CD4-positive, alpha-beta memory T cell (primary cell): ENCODE measurements at regions of chr20 and their contacts with region 1.

Region 1: DNA sequence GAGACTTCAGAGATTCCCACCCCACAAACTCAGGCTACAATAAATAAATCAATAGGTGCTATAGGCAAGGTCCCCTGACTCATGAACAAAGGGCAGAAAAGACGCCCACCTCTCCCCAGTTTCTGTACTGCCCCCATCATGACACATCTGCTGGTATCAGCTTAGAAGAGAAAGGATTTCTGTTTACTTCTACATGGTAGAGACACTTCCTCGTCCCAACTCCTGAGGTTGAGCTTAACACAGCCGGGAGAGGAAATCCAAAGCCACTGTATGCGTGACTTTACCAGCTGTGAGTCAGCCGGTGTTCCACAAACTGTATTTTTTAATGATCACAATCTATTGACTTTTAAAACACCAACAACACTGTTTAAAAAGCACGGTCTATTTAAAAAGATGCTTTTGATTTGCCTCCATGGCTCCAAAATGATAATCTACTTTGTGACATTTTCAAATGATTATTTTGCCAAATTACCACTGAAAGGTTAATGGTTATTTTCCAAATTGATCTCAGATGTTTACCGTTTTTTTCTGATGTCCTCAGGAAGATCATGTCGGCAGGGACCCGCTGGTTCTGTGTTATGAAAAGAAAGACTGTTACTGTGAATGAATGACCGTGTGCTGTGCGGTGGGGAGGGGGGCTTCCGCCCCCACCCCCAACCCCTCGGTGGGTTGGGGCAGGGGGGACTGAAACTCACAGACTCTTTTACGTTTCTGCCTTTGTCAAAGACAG is 72.5 kb downstream of the ATP9A start:
- DNase-seq: no peak
- H3K4me3 ChIP-seq: no peak overlapping the region
- H3K4me3 Mint-ChIP-seq: peak overlapping the region in 2 of 8 donors; percentile 1 to 28
- H3K27ac ChIP-seq: no peak overlapping the region
- H3K27ac Mint-ChIP-seq: no peak overlapping the region
- H3K4me1 ChIP-seq: no peaks in the 10 kb centered on the region
- H3K4me1 Mint-ChIP-seq: peaks cover 0 to 10% (median 4%) of the 10 kb centered on the region in 4 donors
- H3K27me3 ChIP-seq: no peaks in the 10 kb centered on the region
- H3K27me3 Mint-ChIP-seq: peaks cover 17 to 20% of the 10 kb centered on the region in 2 donors

Region 2: DNA sequence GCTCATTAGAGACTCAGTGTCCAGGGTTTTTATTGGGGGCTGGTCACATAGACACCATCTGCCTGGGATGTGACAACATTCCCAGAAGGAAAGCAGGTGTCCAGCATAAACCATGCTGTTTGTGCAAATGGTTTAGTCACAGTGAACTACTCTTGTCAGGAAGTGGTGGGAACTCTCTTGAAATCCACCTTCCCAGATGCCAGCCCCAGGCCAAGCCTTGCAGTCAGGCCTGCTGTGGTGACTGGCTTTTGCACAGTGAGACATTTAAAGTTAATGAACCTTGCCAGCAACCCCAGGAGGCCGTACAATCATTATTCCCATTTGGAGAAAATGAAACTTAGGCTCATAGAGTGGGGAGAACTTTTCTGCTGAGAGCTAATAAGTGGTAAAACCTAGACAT is 430.4 kb before region 1 on chr20:
- CTCF ChIA-PET with region 1: no interaction called
- POLR2A ChIA-PET with region 1: no interaction called
- intact Hi-C with region 1: no loop called
- DNase-seq: no peak
- H3K4me3 ChIP-seq: no peak overlapping the region
- H3K4me3 Mint-ChIP-seq: no peak overlapping the region
- H3K27ac ChIP-seq: no peak overlapping the region
- H3K27ac Mint-ChIP-seq: no peak overlapping the region
- H3K4me1 ChIP-seq: no peaks in the 10 kb centered on the region
- H3K4me1 Mint-ChIP-seq: no peaks in the 10 kb centered on the region
- H3K27me3 ChIP-seq: peaks cover 5% of the 10 kb centered on the region
- H3K27me3 Mint-ChIP-seq: peaks cover 7 to 20% of the 10 kb centered on the region in 2 donors

Region 3: GRCh38 chr20:51487565-51488268 is 208.0 kb before region 1 on chr20:
- CTCF ChIA-PET with region 1: no interaction called
- POLR2A ChIA-PET with region 1: no interaction called
- intact Hi-C with region 1: no loop called
- DNase-seq: peak in 1 of 5 donors; percentile 32
- H3K4me3 ChIP-seq: no peak overlapping the region
- H3K4me3 Mint-ChIP-seq: no peak overlapping the region
- H3K27ac ChIP-seq: no peak overlapping the region
- H3K27ac Mint-ChIP-seq: peak overlapping the region in 3 of 7 donors; percentile 46 to 58 (median 52)
- H3K4me1 ChIP-seq: peaks cover 35% of the 10 kb centered on the region
- H3K4me1 Mint-ChIP-seq: peaks cover 50 to 91% (median 70%) of the 10 kb centered on the region in 4 donors
- H3K27me3 ChIP-seq: no peaks in the 10 kb centered on the region
- H3K27me3 Mint-ChIP-seq: no peaks in the 10 kb centered on the region

Region 4: DNA sequence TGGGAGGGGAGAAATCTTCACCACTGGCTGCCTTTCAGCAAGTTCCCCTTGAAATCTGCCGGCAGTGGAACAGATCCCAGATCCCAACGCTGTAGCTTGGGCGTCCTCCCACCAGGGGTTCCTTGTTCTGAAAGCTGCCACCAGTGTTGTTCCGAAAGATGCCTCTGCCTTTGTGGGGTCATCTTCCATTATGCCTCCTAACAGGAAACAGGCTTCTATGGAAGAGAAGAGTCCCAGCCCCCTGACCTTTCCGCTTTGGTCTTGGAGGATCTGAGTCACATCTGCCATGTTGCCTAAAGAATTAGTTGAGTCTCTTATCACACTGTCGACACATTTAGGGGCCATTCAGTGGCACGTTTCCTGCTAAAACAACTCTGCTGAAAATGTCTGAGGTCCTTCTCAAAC is 95.7 kb before region 1 on chr20:
- CTCF ChIA-PET with region 1: no interaction called
- POLR2A ChIA-PET with region 1: no interaction called
- intact Hi-C with region 1: no loop called
- DNase-seq: no peak
- H3K4me3 ChIP-seq: no peak overlapping the region
- H3K4me3 Mint-ChIP-seq: no peak overlapping the region
- H3K27ac ChIP-seq: no peak overlapping the region
- H3K27ac Mint-ChIP-seq: no peak overlapping the region
- H3K4me1 ChIP-seq: peaks cover 4% of the 10 kb centered on the region
- H3K4me1 Mint-ChIP-seq: peaks cover 2 to 3% (median 2%) of the 10 kb centered on the region in 4 donors
- H3K27me3 ChIP-seq: no peaks in the 10 kb centered on the region
- H3K27me3 Mint-ChIP-seq: peaks cover 6 to 13% of the 10 kb centered on the region in 2 donors

Region 5: GRCh38 chr20:51639206-51639832 is 56.4 kb before region 1 on chr20:
- CTCF ChIA-PET with region 1: interaction called, 4 read pairs
- POLR2A ChIA-PET with region 1: no interaction called
- intact Hi-C with region 1: loop called (anchors 2 kb)
- DNase-seq: peak in 4 of 5 donors; percentile 3 to 28 (median 14)
- H3K4me3 ChIP-seq: no peak overlapping the region
- H3K4me3 Mint-ChIP-seq: no peak overlapping the region
- H3K27ac ChIP-seq: no peak overlapping the region
- H3K27ac Mint-ChIP-seq: no peak overlapping the region
- H3K4me1 ChIP-seq: no peaks in the 10 kb centered on the region
- H3K4me1 Mint-ChIP-seq: peaks cover 0 to 5% (median 2%) of the 10 kb centered on the region in 4 donors
- H3K27me3 ChIP-seq: no peaks in the 10 kb centered on the region
- H3K27me3 Mint-ChIP-seq: peaks cover 1 to 7% of the 10 kb centered on the region in 2 donors

Region 6: DNA sequence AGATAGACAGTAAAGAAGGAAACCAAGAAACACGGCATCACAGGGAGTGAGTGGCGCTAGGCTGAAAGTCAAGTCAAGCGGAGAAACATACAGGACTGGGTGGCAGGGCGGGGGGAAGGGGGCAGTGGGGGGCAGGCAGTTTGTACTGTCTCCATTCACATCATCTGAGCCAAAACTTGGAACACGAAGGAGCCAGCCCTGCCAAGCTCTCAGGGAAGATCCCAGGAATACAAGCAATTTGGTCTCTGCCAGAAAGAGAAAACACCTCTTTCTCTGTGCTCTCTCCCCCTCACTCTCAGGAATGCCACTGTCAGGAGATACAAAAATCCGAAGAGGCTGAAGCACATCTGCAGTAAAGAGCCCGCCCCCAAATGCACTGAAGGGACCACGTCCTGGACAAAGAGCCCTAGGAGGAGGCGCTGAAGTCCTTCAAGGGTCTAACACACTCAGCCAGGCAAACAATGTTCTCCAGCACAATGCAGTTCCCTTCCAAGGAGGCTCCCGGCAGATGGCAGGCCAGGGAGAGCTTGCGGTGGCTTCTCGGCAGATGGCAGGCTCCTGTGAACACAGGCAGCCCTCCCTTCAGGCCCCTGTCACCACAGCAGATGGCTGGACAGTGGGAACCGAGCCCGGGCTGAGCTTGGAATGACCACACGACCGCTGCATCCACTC is 17.6 kb before region 1 on chr20:
- CTCF ChIA-PET with region 1: no interaction called
- POLR2A ChIA-PET with region 1: no interaction called
- intact Hi-C with region 1: no loop called
- DNase-seq: no peak
- H3K4me3 ChIP-seq: no peak overlapping the region
- H3K4me3 Mint-ChIP-seq: no peak overlapping the region
- H3K27ac ChIP-seq: no peak overlapping the region
- H3K27ac Mint-ChIP-seq: no peak overlapping the region
- H3K4me1 ChIP-seq: no peaks in the 10 kb centered on the region
- H3K4me1 Mint-ChIP-seq: no peaks in the 10 kb centered on the region
- H3K27me3 ChIP-seq: no peaks in the 10 kb centered on the region
- H3K27me3 Mint-ChIP-seq: peaks cover 12 to 17% of the 10 kb centered on the region in 2 donors

Region 7: DNA sequence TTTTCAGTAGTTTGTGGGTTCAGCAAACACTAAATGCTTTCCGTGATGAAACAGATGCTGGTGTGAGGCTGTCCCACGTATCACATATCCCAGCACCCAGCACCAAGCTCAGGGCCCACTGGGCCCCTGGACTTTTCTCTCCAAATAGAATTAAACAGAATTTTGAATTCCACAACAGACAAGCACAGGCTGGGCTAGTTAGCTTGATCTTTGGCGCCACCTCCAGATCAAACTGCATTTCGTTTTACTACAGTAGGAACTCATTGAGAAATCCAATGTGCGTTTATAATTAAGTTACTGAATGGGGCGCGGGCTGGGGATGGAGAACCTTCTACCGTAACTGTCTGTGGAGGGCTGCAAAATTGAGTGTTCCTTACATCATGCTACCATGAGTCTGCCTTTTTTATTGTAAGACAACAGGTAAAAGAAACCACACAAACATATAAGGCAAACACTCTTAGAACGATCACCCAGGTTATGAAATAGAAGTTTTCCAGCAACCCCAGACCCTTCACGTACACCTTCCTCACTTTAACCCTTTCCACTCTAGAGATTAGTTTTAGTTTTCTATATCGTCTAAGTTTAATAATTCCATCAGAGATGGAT is 388.0 kb after region 1 on chr20:
- CTCF ChIA-PET with region 1: interaction called, 5 read pairs
- POLR2A ChIA-PET with region 1: no interaction called
- intact Hi-C with region 1: loop called (anchors 2 kb)
- DNase-seq: peak in 3 of 5 donors; percentile 12 to 34 (median 30)
- H3K4me3 ChIP-seq: no peak overlapping the region
- H3K4me3 Mint-ChIP-seq: no peak overlapping the region
- H3K27ac ChIP-seq: no peak overlapping the region
- H3K27ac Mint-ChIP-seq: no peak overlapping the region
- H3K4me1 ChIP-seq: peaks cover 7% of the 10 kb centered on the region
- H3K4me1 Mint-ChIP-seq: peaks cover 5 to 10% (median 9%) of the 10 kb centered on the region in 4 donors
- H3K27me3 ChIP-seq: no peaks in the 10 kb centered on the region
- H3K27me3 Mint-ChIP-seq: no peaks in the 10 kb centered on the region